Activated CD4-positive, alpha-beta T cell treated with anti-CD3 and anti-CD28 coated beads, Interleukin-2, amount 10 ng/mL, durations not matched to agents 24 days and 14 days (primary cell): ENCODE measurements at regions of chr2 and their contacts with region 1.

Region 1: GRCh38 chr2:202643012-202643858 is 8.5 kb downstream of the FAM117B start:
- DNase-seq: peak; percentile 71
- H3K4me3 Mint-ChIP-seq: peak overlapping the region; percentile 73
- H3K27ac Mint-ChIP-seq: peak overlapping the region; percentile 93
- H3K4me1 Mint-ChIP-seq: peaks cover 37% of the 10 kb centered on the region
- H3K27me3 Mint-ChIP-seq: no peaks in the 10 kb centered on the region

Region 2: GRCh38 chr2:202660796-202661195 is 17.6 kb after region 1 on chr2:
- intact Hi-C with region 1: loop called (anchors 2 kb)
- DNase-seq: peak; percentile 40
- H3K4me3 Mint-ChIP-seq: no peak overlapping the region
- H3K27ac Mint-ChIP-seq: no peak overlapping the region
- H3K4me1 Mint-ChIP-seq: peaks cover 26% of the 10 kb centered on the region
- H3K27me3 Mint-ChIP-seq: no peaks in the 10 kb centered on the region

Region 3: GRCh38 chr2:202671317-202672035 is 28.2 kb after region 1 on chr2:
- intact Hi-C with region 1: loop called (anchors 1 kb)
- DNase-seq: no peak
- H3K4me3 Mint-ChIP-seq: no peak overlapping the region
- H3K27ac Mint-ChIP-seq: no peak overlapping the region
- H3K4me1 Mint-ChIP-seq: peaks cover 33% of the 10 kb centered on the region
- H3K27me3 Mint-ChIP-seq: no peaks in the 10 kb centered on the region

Region 4: GRCh38 chr2:202765436-202765835 is 122.2 kb after region 1 on chr2:
- intact Hi-C with region 1: loop called (anchors 5 kb)
- DNase-seq: no peak
- H3K4me3 Mint-ChIP-seq: no peak overlapping the region
- H3K27ac Mint-ChIP-seq: no peak overlapping the region
- H3K4me1 Mint-ChIP-seq: peaks cover 25% of the 10 kb centered on the region
- H3K27me3 Mint-ChIP-seq: no peaks in the 10 kb centered on the region